ENCODE measurements at regions of chr19 and their contacts with region 1.

Region 1: DNA sequence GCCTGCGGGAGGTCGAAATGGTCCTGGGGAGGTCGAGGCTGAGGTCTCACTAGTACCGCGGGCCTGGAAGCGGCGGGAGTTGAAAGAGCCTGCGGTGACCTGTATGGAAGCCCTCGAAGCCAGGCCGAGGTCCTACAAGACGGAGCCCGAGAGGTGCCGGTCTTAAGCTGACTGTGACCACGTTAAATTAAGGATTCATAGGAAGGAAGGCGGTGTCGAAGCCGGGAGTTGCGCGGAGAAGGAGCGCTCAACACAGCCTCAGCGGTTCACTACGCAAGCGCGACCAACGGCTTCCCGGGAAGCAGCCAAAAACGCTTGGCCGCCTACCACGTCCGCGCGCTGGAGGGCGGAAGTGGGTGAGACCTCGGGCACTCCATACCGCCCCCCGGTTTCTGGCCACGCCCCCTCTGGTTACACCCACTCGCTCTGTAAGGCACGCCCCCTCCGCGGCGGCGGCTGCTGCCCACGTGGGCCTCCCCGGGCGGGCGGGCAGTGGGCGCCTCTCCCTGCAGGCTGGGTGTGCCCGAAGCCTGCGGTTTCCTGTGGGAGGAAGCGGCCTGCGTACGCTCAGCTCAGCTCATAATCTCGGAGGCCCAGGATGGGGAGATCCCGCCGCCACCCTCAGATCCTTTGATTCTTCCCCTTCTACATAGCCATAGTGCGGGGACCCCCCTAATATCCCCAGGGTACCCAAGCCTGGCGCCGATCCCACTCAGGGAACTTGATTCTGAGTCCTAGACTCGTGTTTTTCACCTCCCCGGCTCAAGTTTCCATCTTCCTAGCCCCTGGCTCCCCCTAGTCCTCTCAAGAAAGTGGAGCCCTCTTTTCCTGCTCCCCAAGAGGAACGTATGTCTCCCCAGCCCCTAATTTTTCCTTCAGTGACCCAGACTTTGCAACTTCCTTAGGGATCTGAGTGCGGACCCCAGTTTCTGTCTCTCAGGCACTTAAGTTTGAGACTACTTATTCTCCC is 3.4 kb upstream of the EMP3 start:
- DNase-seq: peak; percentile 98 to 100 (median 100)
- ATAC-seq: peak; percentile 61
- H3K4me3 ChIP-seq: peak overlapping the region; percentile 76
- H3K4me3 Mint-ChIP-seq: peak overlapping the region; percentile 93
- H3K27ac ChIP-seq: peak overlapping the region; percentile 99 to 100
- H3K27ac Mint-ChIP-seq: peak overlapping the region; percentile 99
- H3K4me1 ChIP-seq: peaks cover 62% of the 10 kb centered on the region
- H3K4me1 Mint-ChIP-seq: peaks cover 68% of the 10 kb centered on the region
- H3K27me3 ChIP-seq: no peaks in the 10 kb centered on the region
- H3K27me3 Mint-ChIP-seq: no peaks in the 10 kb centered on the region
- CTCF ChIP-seq: no peak

Region 2: DNA sequence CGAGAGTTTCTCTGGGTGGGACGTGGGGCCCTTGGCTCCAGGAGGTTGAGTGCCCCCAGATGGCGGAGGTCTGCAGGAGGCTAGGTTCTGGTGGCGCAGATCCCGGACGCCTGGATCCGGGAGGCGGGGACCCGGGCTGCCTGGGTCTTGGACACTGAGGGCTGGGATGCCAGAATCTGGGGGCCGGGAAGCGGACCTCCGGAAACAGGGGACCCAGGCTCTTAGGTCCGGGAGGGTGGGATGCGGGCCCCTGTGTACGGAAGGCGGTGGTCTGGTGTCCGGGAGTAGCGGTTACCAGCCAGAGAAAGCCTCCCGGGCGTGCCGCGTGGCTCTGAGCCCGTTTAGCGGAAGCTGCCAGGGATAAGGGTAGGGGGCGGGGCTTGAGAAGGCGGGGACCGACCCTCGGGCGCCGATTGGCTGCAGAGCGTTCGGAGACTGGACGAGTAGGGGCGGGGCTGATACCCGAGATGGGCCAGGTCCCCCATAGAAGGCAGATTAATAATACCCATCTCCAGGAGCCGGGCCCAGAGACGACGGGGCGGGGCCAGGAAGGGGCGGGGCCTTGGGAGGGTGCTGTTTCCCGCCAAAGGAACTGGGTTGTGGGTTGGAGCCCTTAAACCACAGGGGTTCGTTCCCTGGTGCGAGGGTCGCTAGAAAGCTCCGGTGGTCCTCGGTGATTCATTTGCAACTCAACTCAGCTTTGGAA is 1533.5 kb before region 1 on chr19 and contains the start of gene SLC1A5:
- CTCF ChIA-PET with region 1: no interaction called
- POLR2A ChIA-PET with region 1: no interaction called
- intact Hi-C with region 1: loop called in 1 of 2 experiments (anchors 10 kb)
- DNase-seq: peak; percentile 90 to 99 (median 94)
- ATAC-seq: peak; percentile 80
- H3K4me3 ChIP-seq: peak within 1 kb of the TSS; percentile 76
- H3K4me3 Mint-ChIP-seq: peak within 1 kb of the TSS; percentile 93
- H3K27ac ChIP-seq: peak within 1 kb of the TSS; percentile 44 to 72
- H3K27ac Mint-ChIP-seq: peak within 1 kb of the TSS; percentile 86
- H3K4me1 ChIP-seq: peaks cover 71% of the 10 kb centered on the region
- H3K4me1 Mint-ChIP-seq: peaks cover 62% of the 10 kb centered on the region
- H3K27me3 ChIP-seq: no peaks in the 10 kb centered on the region
- H3K27me3 Mint-ChIP-seq: no peaks in the 10 kb centered on the region
- CTCF ChIP-seq: no peak
- total RNA-seq, gene SLC1A5: 7.1 TPM

Region 3: DNA sequence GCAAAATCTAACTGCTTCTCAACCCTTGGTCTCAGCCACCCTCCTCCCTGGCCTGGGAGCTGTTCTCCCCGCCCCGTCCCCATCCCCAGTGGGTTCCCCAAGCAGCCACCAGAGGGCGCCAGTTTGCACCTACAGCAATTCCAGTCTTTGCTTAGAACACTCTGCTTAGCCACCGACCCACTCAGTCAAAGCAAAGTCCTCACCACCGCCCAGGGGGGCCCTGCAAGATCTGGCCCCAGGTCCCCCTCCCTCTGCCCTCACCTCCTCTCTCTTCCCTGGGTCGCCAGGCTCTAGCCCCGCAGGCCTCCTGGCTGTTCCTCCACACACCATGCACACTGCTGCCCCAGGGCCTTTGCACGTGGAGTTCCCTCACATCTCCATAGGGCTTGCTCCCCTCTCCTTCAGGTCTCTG is 29.4 kb after region 1 on chr19:
- CTCF ChIA-PET with region 1: no interaction called
- POLR2A ChIA-PET with region 1: no interaction called
- intact Hi-C with region 1: loop called in 1 of 2 experiments (anchors 5 kb)
- DNase-seq: peak; percentile 66 to 86 (median 76)
- ATAC-seq: peak; percentile 89
- H3K4me3 ChIP-seq: no peak overlapping the region
- H3K4me3 Mint-ChIP-seq: no peak overlapping the region
- H3K27ac ChIP-seq: no peak overlapping the region
- H3K27ac Mint-ChIP-seq: no peak overlapping the region
- H3K4me1 ChIP-seq: peaks cover 5% of the 10 kb centered on the region
- H3K4me1 Mint-ChIP-seq: peaks cover 6% of the 10 kb centered on the region
- H3K27me3 ChIP-seq: no peaks in the 10 kb centered on the region
- H3K27me3 Mint-ChIP-seq: no peaks in the 10 kb centered on the region
- CTCF ChIP-seq: peak; percentile 78

Region 4: DNA sequence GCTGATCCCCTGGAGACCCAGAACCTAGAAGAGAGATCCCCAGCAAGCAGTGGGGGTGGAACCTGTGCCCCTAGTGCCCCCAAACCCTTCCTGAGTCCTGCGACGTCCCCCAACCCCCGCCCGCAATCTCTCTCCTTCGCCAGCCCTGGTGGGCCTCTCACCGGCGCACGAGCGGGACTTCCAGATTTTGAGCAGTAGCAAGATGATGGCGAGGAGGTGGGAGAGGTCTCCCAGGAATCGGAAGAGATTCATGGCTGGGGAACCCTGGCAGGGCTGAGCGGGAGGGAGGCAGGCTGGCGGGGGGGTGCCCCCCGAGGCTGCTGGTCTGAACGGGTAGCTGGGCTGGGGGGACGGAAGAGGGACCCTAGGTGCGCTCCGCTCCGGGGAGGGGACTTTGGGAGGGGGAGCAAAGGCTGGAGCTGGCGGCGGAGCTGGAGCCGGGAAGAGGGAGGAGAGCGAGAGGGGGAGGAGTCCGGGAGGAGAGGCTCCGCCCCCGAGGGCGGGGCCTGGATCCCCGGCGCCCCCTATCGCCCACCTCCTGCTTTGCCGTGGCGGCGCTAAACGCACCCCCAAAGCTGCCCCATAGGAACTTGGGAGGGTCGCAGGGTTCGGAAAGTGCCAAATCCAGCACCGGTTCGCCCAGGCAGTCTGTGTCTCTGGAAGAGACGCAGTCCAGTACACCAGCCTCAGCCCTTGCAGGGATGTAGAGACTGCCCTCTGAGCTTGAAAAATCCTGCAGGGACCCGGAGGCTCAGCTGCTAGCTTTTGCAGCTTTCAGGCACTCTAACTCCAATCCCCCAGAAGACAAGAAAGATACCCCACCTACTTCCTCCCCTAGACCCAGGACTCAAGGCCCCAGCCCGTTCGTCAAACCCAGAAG is 69.4 kb after region 1 on chr19 and contains the start of gene KDELR1:
- CTCF ChIA-PET with region 1: interaction called, 8 read pairs
- POLR2A ChIA-PET with region 1: interaction called, 5 read pairs
- intact Hi-C with region 1: loop called (anchors 2 kb)
- DNase-seq: peak; percentile 56 to 85 (median 69)
- ATAC-seq: peak; percentile 79
- H3K4me3 ChIP-seq: peak within 1 kb of the TSS; percentile 89
- H3K4me3 Mint-ChIP-seq: peak within 1 kb of the TSS; percentile 94
- H3K27ac ChIP-seq: peak within 1 kb of the TSS; percentile 71 to 79
- H3K27ac Mint-ChIP-seq: peak within 1 kb of the TSS; percentile 93
- H3K4me1 ChIP-seq: peaks cover 57% of the 10 kb centered on the region
- H3K4me1 Mint-ChIP-seq: peaks cover 34% of the 10 kb centered on the region
- H3K27me3 ChIP-seq: peaks cover 31% of the 10 kb centered on the region in 2 experiments
- H3K27me3 Mint-ChIP-seq: peaks cover 29% of the 10 kb centered on the region
- CTCF ChIP-seq: peak; percentile 93
- total RNA-seq, gene KDELR1: 32.2 to 39.6 TPM

Region 5: DNA sequence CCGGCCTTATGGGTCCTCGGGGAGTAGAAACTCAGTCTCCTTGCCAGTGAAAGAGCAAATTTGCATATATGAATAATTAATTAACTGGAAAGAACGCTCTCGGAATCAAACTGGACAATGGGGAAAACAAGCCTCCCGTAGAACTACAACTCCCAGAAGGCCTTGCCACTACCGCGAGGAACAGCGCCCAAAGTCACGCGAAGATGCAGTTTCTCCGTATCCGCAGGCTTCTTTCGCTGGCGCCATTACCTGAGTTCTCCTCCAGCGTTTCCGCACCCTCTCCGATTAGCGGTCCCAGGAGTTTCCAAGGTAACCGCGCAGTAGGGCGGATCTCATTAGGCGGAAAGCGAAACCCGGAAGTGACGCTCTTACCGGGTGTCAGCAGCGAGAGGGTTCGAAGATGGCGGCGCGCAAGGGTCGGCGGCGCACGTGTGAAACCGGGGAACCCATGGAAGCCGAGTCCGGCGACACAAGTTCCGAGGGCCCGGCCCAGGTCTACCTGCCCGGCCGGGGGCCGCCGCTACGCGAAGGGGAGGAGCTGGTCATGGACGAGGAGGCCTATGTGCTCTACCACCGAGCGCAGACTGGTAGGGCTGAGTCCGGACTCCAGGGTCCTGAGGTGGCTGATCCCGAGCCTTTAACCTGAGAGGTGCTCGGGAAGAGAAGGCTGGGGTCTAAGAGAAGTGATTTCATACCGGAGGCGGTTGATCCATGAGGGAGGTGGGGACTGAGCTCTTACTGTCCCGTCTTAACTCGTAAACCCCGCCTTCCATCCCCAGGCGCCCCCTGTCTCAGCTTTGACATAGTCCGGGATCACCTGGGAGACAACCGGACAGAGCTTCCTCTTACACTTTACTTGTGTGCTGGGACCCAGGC is 123.9 kb after region 1 on chr19 and contains the start of gene GRWD1:
- CTCF ChIA-PET with region 1: no interaction called
- POLR2A ChIA-PET with region 1: interaction called, 3 read pairs
- intact Hi-C with region 1: loop called in 1 of 2 experiments (anchors 5 kb)
- DNase-seq: peak; percentile 85 to 99 (median 91)
- ATAC-seq: peak; percentile 94
- H3K4me3 ChIP-seq: peak within 1 kb of the TSS; percentile 85
- H3K4me3 Mint-ChIP-seq: peak within 1 kb of the TSS; percentile 93
- H3K27ac ChIP-seq: peak within 1 kb of the TSS; percentile 58 to 74
- H3K27ac Mint-ChIP-seq: peak within 1 kb of the TSS; percentile 78
- H3K4me1 ChIP-seq: peaks cover 31% of the 10 kb centered on the region
- H3K4me1 Mint-ChIP-seq: peaks cover 25% of the 10 kb centered on the region
- H3K27me3 ChIP-seq: peaks cover 15 to 25% of the 10 kb centered on the region in 2 experiments
- H3K27me3 Mint-ChIP-seq: peaks cover 28% of the 10 kb centered on the region
- CTCF ChIP-seq: no peak
- total RNA-seq, gene GRWD1: 21.4 to 21.7 TPM

Region 6: DNA sequence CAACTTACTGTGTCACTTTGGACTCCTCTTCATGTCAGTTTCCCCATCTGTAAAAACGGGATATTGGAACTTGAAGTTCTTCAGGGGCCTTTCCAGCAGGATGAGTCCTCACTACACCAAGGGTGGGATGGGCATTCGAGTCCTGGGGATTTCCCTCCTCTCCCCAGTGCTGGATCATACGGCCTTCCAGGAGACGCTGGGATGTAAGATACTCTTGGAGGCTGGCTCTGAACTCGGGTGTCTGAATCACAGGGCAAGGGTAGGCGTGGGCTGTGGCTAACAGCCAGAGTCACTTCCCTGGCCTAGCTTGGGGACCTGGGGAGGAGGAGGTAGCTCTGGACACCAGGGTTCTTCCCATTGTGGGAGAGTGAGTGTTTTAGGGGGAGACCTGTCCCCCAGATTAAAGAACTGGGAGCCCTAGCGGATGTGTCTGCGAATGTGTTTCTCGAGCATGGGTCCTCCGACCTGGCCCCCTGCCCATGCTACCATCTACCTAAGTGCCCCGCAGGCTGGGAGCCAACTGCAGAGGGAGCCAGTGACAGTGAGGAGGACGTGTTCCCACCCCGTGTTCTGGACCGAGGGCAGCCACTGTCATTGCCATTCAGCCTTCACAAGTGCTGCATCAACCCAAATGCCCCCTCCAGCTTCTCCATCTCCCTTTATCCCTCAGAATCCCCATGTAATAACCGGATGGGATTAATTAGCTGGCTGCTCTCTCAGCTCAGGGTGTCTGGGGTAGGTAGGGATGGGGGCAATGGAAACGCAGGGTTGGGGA is 144.8 kb after region 1 on chr19:
- CTCF ChIA-PET with region 1: no interaction called
- POLR2A ChIA-PET with region 1: no interaction called
- intact Hi-C with region 1: no loop called
- DNase-seq: no peak
- ATAC-seq: no peak
- H3K4me3 ChIP-seq: no peak overlapping the region
- H3K4me3 Mint-ChIP-seq: no peak overlapping the region
- H3K27ac ChIP-seq: no peak overlapping the region
- H3K27ac Mint-ChIP-seq: no peak overlapping the region
- H3K4me1 ChIP-seq: peaks cover 20% of the 10 kb centered on the region
- H3K4me1 Mint-ChIP-seq: peaks cover 21% of the 10 kb centered on the region
- H3K27me3 ChIP-seq: no peaks in the 10 kb centered on the region
- H3K27me3 Mint-ChIP-seq: no peaks in the 10 kb centered on the region
- CTCF ChIP-seq: no peak

Region 7: GRCh38 chr19:48492925-48493717 is 171.2 kb after region 1 on chr19:
- CTCF ChIA-PET with region 1: no interaction called
- POLR2A ChIA-PET with region 1: no interaction called
- intact Hi-C with region 1: loop called in 1 of 2 experiments (anchors 5 kb)
- DNase-seq: peak; percentile 61 to 92 (median 78)
- ATAC-seq: peak; percentile 76
- H3K4me3 ChIP-seq: peak overlapping the region; percentile 50
- H3K4me3 Mint-ChIP-seq: peak overlapping the region; percentile 83
- H3K27ac ChIP-seq: no peak overlapping the region
- H3K27ac Mint-ChIP-seq: peak overlapping the region; percentile 52
- H3K4me1 ChIP-seq: peaks cover 60% of the 10 kb centered on the region
- H3K4me1 Mint-ChIP-seq: peaks cover 49% of the 10 kb centered on the region
- H3K27me3 ChIP-seq: peaks cover 0 to 40% of the 10 kb centered on the region in 2 experiments
- H3K27me3 Mint-ChIP-seq: peaks cover 53% of the 10 kb centered on the region
- CTCF ChIP-seq: no peak

Region 8: DNA sequence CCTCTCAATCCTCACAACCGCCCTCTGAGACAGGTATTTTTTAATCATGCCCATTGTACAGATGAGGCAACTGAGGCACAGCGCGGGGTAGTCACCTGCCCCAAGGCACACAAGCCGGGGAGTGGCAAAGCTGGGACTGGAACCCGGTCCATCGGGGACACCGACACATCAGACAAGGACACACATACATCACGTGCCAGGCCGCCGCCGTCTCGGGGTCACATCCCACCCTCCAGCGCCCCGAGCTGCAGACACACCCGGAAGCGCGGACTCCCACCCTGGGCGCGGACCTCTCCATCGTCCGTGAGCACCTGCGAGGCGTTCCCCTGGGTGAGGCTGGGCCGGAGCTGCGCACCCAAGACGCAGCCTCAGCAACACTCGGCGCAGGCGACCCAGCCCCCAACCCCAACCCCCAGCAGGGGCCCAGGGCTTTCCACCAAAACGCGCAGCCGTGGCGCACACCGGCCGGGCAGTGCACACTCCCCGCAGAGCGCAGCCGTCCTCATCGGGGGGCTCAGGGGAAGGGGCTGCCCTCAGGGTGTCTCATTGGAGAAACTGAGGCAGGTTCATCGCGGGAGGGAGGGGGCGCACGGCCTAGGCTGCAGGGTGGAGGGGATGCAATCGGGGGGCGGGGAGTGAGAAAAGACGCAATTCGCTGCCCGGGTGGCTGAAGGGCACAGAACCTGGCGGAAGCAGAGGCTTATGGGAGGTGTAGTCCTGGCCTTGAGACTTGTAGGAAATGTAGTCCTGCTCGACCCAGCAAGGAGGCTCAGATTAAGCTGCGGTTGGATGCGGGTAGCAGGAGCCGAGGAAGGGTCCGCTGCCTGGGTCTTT is 191.6 kb after region 1 on chr19:
- CTCF ChIA-PET with region 1: no interaction called
- POLR2A ChIA-PET with region 1: no interaction called
- intact Hi-C with region 1: loop called in 1 of 2 experiments (anchors 5 kb)
- DNase-seq: peak; percentile 57 to 89 (median 75)
- ATAC-seq: peak; percentile 59
- H3K4me3 ChIP-seq: peak overlapping the region; percentile 74
- H3K4me3 Mint-ChIP-seq: no peak overlapping the region
- H3K27ac ChIP-seq: peak overlapping the region; percentile 36 to 68
- H3K27ac Mint-ChIP-seq: no peak overlapping the region
- H3K4me1 ChIP-seq: peaks cover 42% of the 10 kb centered on the region
- H3K4me1 Mint-ChIP-seq: peaks cover 15% of the 10 kb centered on the region
- H3K27me3 ChIP-seq: no peaks in the 10 kb centered on the region
- H3K27me3 Mint-ChIP-seq: no peaks in the 10 kb centered on the region
- CTCF ChIP-seq: no peak

Region 9: DNA sequence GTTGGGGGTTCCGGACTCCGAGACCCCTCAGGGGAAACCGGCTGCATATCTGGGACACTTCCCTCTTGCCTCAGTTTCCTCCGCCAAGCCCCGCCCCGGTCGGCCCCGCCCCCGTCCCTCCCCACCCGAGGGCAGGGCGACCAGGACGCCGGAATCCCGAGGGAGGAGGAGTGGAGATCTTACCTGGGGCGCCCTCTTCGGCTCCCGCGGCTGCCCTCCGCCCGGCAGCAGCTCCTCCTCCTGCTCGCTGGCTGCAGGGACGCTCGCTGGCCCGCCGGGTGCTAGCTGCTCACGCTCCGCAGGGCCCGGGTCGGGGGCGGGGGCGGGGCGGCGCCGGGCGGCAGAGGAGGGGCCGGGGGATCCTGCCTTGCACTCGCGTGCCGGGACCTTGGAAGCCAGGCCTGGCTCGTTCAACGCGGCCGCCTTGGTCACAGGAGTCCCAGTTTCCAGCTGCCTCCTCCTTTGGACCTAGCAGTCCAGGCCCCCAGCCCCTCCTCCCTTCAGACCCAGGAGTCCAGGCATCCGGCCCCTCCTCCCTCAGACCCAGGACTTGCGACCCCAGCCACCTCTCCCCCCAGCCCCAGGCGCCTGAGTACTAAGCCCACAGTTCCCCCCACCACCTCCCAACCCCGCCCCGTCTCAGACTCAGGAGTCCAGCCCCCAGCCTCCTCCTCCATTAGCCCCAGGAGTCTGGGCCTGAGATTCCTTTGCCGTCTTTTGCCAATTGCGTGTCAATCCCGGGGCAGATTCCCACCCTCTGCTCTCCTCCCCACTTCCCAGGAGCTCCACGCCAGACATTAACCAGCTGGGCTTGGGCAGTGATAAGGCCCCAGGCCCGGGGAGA is 743.1 kb after region 1 on chr19 and contains the start of gene NTF4:
- CTCF ChIA-PET with region 1: no interaction called
- POLR2A ChIA-PET with region 1: no interaction called
- intact Hi-C with region 1: no loop called
- DNase-seq: peak in 1 of 14 experiments; percentile 35
- ATAC-seq: peak; percentile 52
- H3K4me3 ChIP-seq: no peak within 1 kb of the TSS
- H3K4me3 Mint-ChIP-seq: no peak within 1 kb of the TSS
- H3K27ac ChIP-seq: no peak within 1 kb of the TSS
- H3K27ac Mint-ChIP-seq: no peak within 1 kb of the TSS
- H3K4me1 ChIP-seq: peaks cover 8% of the 10 kb centered on the region
- H3K4me1 Mint-ChIP-seq: no peaks in the 10 kb centered on the region
- H3K27me3 ChIP-seq: peaks cover 37 to 57% of the 10 kb centered on the region in 2 experiments
- H3K27me3 Mint-ChIP-seq: peaks cover 73% of the 10 kb centered on the region
- CTCF ChIP-seq: no peak
- total RNA-seq, gene NTF4: not detected